ENCODE measurements at regions of chr6 and their contacts with region 1.

Region 1: DNA sequence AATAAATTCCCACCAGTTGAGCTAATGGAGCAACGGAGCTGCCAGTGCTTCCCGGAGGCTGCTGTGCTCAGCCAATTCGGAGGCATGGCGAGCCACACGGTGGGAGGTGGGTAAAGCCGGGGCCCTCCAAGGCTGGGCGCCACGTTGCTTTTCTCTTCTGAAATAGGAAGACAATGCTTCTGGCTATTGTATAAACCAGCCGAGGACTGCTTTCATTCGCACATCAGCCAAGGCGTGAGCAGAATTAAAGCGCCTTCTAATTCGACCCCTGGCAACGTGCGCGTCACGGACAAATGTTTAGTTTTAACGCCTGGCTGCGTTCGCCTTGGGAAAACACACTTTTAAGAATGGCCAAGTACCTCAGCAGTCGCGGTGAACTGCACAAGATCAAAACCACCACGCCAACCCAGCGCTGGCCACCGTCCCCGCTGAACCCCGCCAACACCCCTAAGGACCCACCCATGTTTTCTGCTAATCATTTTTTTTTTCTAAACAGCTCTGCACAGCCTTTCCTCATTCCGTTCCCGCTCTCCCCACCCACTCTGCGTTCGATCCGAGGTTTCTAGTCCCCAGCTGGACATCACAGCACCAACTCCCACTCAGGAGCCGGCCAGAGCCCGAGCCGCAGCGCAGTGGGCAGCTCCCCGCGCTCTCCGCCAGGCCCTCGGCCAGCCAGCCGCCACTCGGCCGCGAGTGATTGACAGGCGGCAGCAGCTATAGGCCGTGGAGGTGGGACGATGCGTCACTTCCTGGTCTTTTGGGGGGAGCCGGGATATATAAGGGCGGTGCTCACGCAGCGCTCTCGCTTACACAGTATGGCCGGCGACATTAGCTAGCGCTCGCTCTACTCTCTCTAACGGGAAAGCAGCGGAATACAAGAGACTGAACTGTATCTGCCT is at the start of gene AMD1:
- DNase-seq: peak; percentile 100
- H3K4me3 ChIP-seq: peak within 1 kb of the TSS; percentile 84 to 95
- H3K27ac ChIP-seq: peak within 1 kb of the TSS; percentile 88 to 93
- H3K4me1 ChIP-seq: peaks cover 24% of the 10 kb centered on the region
- H3K27me3 ChIP-seq: no peaks in the 10 kb centered on the region
- CTCF ChIP-seq: peak in 1 of 3 experiments; percentile 10
- POLR2A ChIP-seq: peak; percentile 97
- total RNA-seq, gene AMD1: 85.6 to 109 TPM

Region 2: GRCh38 chr6:110358553-110359150 is 515.6 kb before region 1 on chr6:
- intact Hi-C with region 1: no loop called
- DNase-seq: no peak
- H3K4me3 ChIP-seq: peak overlapping the region; percentile 62 to 68
- H3K27ac ChIP-seq: peak overlapping the region; percentile 61 to 89
- H3K4me1 ChIP-seq: peaks cover 10% of the 10 kb centered on the region
- H3K27me3 ChIP-seq: no peaks in the 10 kb centered on the region
- CTCF ChIP-seq: no peak
- POLR2A ChIP-seq: no peak

Region 3: DNA sequence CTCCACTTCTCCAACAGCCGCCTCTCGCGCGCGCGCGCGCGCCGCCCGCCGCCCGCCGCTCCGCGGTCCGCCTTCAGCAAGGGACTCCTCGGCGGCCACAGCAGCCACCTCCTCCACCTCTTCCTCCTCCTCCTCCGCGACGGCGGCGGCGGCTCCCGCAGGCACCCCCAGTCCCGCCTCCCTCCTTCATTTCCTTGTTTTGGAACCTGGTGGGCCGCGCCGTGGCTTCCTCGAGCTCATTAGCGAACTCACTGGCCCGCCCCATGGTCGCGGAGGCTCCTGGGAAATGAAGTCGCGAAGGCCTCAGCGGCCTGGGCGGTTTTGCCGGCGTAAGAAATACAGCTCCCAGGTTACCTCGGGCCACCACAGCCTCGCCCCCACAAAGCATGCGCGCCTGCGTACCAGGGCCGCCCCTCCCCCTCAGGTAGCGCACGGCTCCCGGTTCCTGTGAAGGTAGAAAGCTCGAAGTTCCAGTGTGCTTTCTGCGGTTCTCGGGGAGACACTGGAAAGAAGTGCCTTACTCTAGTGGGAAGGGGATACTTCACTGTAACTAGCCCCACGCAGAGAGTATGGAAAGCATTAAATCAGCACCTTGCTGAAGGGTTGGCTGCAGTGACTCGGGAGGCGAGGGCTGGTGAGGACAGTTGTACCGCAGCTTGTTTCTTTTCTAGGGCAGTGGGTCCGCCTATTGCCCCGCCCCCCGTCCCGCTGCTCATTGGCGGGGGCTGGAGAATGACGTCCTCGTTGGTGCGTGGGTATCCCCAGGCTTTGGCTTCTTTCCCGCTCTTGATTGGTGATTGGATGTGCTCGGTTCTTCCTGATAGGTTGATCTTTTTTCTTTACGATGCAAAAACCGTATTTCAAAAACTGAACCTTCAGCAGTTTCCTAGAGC is 58.8 kb before region 1 on chr6 and contains the start of gene CDK19:
- intact Hi-C with region 1: loop called (anchors 10 kb)
- DNase-seq: peak; percentile 99
- H3K4me3 ChIP-seq: peak within 1 kb of the TSS; percentile 91 to 98
- H3K27ac ChIP-seq: peak within 1 kb of the TSS; percentile 96 to 99
- H3K4me1 ChIP-seq: no peaks in the 10 kb centered on the region
- H3K27me3 ChIP-seq: no peaks in the 10 kb centered on the region
- CTCF ChIP-seq: no peak
- POLR2A ChIP-seq: peak; percentile 3
- total RNA-seq, gene CDK19: 30.7 to 31.5 TPM

Region 4: GRCh38 chr6:111087106-111087835 is 213.0 kb after region 1 on chr6 and contains the start of gene SLC16A10:
- intact Hi-C with region 1: no loop called
- DNase-seq: peak; percentile 78
- H3K4me3 ChIP-seq: peak within 1 kb of the TSS; percentile 64 to 67
- H3K27ac ChIP-seq: peak within 1 kb of the TSS in 1 of 2 donors; percentile 62
- H3K4me1 ChIP-seq: no peaks in the 10 kb centered on the region
- H3K27me3 ChIP-seq: no peaks in the 10 kb centered on the region
- CTCF ChIP-seq: no peak
- POLR2A ChIP-seq: no peak
- total RNA-seq, gene SLC16A10: 12.0 to 16.9 TPM

Region 5: DNA sequence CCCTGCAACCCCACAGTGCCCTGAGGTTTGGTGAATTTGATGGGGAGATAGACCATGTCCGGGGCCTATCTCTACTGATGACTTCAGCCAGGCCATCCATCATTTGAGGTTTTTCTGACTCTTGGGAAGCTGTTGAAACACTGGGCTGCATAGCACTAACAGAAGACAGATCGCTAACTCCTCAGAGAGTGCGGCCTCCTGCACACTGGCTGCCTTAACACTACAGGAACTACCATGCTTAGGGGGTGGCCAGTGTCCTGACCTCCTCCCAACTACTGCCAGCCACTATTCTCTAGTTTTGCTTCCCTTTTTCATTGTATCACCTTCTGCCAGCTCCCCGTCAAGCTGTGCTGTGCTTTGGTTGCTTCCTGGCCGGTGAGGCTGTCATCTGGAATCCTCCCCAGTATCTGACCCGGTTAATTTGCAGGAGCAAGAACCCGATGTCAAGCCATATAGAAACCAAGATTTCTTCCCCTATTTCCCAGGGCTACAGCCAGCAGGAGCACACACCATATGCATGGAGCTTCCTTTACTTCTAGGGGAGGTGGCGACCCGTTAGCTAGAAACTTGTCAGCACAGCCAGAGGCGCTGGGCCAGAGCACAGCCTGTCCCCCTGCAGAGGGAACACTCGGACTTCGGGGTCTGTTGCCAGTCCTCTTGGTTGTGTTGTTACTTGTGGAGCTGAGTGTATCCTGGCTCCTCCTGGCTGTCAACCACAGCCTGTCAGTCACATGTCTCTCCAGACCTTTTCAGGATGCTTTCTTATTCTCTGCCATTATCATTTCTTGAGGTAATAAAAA is 788.8 kb after region 1 on chr6:
- intact Hi-C with region 1: no loop called
- DNase-seq: peak; percentile 80
- H3K4me3 ChIP-seq: no peak overlapping the region
- H3K27ac ChIP-seq: peak overlapping the region in 1 of 2 donors; percentile 73
- H3K4me1 ChIP-seq: peaks cover 27% of the 10 kb centered on the region
- H3K27me3 ChIP-seq: no peaks in the 10 kb centered on the region
- CTCF ChIP-seq: no peak
- POLR2A ChIP-seq: no peak

Measured in testis (tissue), 5 donors.